ENCODE measurements at regions of chr1 and their contacts with region 1.

Region 1: GRCh38 chr1:204806943-204807687 is 63.5 kb upstream of the NFASC start:
- DNase-seq: peak; percentile 90
- ATAC-seq: peak; percentile 96
- H3K4me3 Mint-ChIP-seq: peak overlapping the region; percentile 78
- H3K27ac Mint-ChIP-seq: peak overlapping the region; percentile 88
- H3K4me1 Mint-ChIP-seq: peaks cover 25% of the 10 kb centered on the region
- H3K27me3 Mint-ChIP-seq: peaks cover 11% of the 10 kb centered on the region

Region 2: GRCh38 chr1:204431310-204432165 is 375.6 kb before region 1 on chr1:
- CTCF ChIA-PET with region 1: interaction called, 19 read pairs
- POLR2A ChIA-PET with region 1: no interaction called
- DNase-seq: peak; percentile 86
- ATAC-seq: peak; percentile 93
- H3K4me3 Mint-ChIP-seq: no peak overlapping the region
- H3K27ac Mint-ChIP-seq: no peak overlapping the region
- H3K4me1 Mint-ChIP-seq: no peaks in the 10 kb centered on the region
- H3K27me3 Mint-ChIP-seq: no peaks in the 10 kb centered on the region

Region 3: GRCh38 chr1:204544321-204544720 is 262.8 kb before region 1 on chr1:
- CTCF ChIA-PET with region 1: interaction called, 10 read pairs
- POLR2A ChIA-PET with region 1: no interaction called
- DNase-seq: no peak
- ATAC-seq: peak; percentile 87
- H3K4me3 Mint-ChIP-seq: peak overlapping the region; percentile 23
- H3K27ac Mint-ChIP-seq: peak overlapping the region; percentile 83
- H3K4me1 Mint-ChIP-seq: peaks cover 55% of the 10 kb centered on the region
- H3K27me3 Mint-ChIP-seq: no peaks in the 10 kb centered on the region

Region 4: DNA sequence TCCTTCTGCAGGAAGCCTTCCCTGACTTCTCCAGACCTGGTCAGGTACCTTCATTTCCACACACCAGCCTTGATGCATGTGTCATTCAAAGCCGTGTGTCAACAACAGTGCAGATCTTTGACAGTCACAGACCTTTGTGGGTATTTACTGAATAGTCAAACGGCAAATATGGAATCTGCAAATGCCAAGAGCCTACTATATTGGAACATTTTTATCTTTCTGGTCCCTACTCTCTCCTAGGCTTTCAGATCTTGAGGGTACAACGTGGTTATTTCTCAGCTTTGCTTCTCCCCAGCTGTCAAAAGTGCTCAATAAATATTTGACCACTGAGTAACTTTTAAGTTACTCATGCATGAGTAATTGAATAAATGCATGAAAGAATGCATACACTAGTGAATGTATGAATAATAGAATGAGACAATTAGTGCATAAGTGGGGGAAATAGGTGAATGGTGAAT is 215.5 kb before region 1 on chr1:
- CTCF ChIA-PET with region 1: interaction called, 12 read pairs
- POLR2A ChIA-PET with region 1: no interaction called
- DNase-seq: no peak
- ATAC-seq: no peak
- H3K4me3 Mint-ChIP-seq: no peak overlapping the region
- H3K27ac Mint-ChIP-seq: no peak overlapping the region
- H3K4me1 Mint-ChIP-seq: no peaks in the 10 kb centered on the region
- H3K27me3 Mint-ChIP-seq: no peaks in the 10 kb centered on the region

Region 5: DNA sequence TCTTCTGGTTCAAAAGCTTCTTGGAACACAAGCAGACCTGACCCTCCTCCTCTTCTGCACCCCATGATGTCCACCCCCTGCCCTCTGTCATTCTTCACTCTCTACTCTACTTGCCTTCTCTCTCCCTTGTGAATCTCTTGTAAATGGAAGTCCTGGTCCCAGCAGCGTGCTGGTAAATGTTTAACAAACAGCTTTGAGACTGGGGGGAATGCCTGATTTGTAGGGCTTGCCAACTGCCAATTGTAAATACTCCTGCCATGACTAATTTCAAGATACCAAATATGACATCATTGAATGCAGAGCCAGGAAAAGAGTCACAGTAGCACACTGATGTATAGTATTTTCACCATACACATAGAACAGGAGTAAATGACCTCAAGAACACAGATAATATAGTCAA is 80.6 kb before region 1 on chr1:
- CTCF ChIA-PET with region 1: interaction called, 11 read pairs
- POLR2A ChIA-PET with region 1: no interaction called
- DNase-seq: no peak
- ATAC-seq: no peak
- H3K4me3 Mint-ChIP-seq: no peak overlapping the region
- H3K27ac Mint-ChIP-seq: no peak overlapping the region
- H3K4me1 Mint-ChIP-seq: no peaks in the 10 kb centered on the region
- H3K27me3 Mint-ChIP-seq: peaks cover 12% of the 10 kb centered on the region

Region 6: GRCh38 chr1:204791453-204792353 is 15.4 kb before region 1 on chr1:
- CTCF ChIA-PET with region 1: interaction called, 218 read pairs
- POLR2A ChIA-PET with region 1: interaction called, 3 read pairs
- DNase-seq: peak; percentile 88
- ATAC-seq: peak; percentile 98
- H3K4me3 Mint-ChIP-seq: no peak overlapping the region
- H3K27ac Mint-ChIP-seq: no peak overlapping the region
- H3K4me1 Mint-ChIP-seq: peaks cover 2% of the 10 kb centered on the region
- H3K27me3 Mint-ChIP-seq: peaks cover 26% of the 10 kb centered on the region